ENCODE measurements at regions of chr3 and their contacts with region 1.

Region 1: GRCh38 chr3:65672871-65673815 is 365.6 kb downstream of the MAGI1 start:
- DNase-seq: peak; percentile 64
- H3K4me3 Mint-ChIP-seq: no peak overlapping the region
- H3K27ac Mint-ChIP-seq: no peak overlapping the region
- H3K4me1 Mint-ChIP-seq: peaks cover 15% of the 10 kb centered on the region
- H3K27me3 Mint-ChIP-seq: no peaks in the 10 kb centered on the region
- CTCF ChIP-seq: peak; percentile 63

Region 2: DNA sequence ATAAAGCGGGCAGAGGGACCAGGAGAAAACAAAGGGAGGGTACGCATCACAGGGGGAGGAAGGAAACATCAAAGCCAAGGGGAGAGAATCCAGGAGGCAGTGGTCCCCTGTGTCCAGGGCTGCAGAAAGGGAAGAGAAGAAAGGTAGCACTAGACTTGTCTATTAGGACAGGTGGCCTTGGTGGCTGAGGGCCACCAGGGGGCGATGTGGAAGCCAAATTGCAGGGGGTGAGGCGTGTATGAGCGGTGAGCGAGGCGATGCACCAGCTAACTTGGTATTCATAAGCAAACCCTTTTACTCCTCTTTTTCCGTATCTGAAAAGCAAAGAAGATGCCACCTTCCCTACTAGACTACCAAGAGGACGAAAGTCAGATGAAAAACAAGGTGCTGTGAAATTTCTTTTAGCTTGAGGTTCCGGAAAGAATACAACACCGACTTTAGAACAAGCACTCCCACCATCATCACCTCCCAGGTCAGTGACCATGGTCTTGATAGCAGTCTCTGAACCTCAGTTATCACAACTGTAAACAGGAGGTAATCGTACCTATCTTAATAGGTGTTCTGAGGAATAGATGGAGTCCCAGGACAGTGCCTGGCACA is 331.0 kb before region 1 on chr3:
- CTCF ChIA-PET with region 1: no interaction called
- intact Hi-C with region 1: loop called (anchors 10 kb)
- DNase-seq: peak; percentile 72
- H3K4me3 Mint-ChIP-seq: no peak overlapping the region
- H3K27ac Mint-ChIP-seq: no peak overlapping the region
- H3K4me1 Mint-ChIP-seq: no peaks in the 10 kb centered on the region
- H3K27me3 Mint-ChIP-seq: no peaks in the 10 kb centered on the region
- CTCF ChIP-seq: peak; percentile 75

Region 3: DNA sequence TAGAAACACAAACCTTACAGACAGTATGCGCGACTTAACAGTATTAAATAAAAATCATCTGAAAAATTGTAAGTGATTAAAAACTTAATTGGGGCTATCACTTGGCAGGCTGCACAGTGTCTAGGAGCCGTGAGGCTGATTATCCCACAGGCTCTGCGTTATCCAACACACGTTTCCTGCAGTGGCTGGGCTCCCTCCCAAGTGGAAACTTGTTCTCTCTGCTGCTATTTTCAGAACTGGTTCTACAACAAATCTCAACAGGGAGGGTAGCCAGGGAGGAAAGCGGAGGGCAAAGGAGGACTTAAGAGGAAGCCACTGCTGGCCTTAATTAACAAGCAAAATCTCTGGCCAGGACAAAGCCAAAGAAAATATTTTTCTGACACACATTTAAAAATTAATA is 189.7 kb before region 1 on chr3:
- CTCF ChIA-PET with region 1: no interaction called
- intact Hi-C with region 1: loop called (anchors 5 kb)
- DNase-seq: peak; percentile 61
- H3K4me3 Mint-ChIP-seq: no peak overlapping the region
- H3K27ac Mint-ChIP-seq: no peak overlapping the region
- H3K4me1 Mint-ChIP-seq: peaks cover 37% of the 10 kb centered on the region
- H3K27me3 Mint-ChIP-seq: no peaks in the 10 kb centered on the region
- CTCF ChIP-seq: no peak

Region 4: DNA sequence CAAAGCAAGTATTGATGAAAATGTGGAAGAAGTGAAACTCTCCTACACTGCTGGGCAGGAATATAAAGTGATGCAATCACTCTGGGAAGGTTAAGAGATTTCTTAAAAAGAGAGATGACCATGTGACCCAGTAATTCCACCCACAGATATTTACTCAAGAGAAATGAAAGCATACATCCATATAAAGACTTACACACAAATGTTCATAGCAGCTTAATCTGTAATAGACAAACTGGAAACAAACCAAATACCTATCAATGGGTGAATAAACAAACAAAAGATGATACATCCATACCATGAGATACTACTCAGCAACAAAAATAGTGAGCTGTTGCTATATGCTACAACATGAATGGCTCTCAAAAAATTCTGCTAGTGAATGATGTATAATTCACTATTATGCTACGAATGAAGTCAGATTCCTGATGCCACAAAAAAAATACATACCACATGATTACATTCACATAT is 97.7 kb before region 1 on chr3:
- CTCF ChIA-PET with region 1: no interaction called
- intact Hi-C with region 1: loop called (anchors 10 kb)
- DNase-seq: no peak
- H3K4me3 Mint-ChIP-seq: no peak overlapping the region
- H3K27ac Mint-ChIP-seq: peak overlapping the region; percentile 4
- H3K4me1 Mint-ChIP-seq: peaks cover 42% of the 10 kb centered on the region
- H3K27me3 Mint-ChIP-seq: no peaks in the 10 kb centered on the region
- CTCF ChIP-seq: no peak